Activated CD4-positive, alpha-beta T cell treated with anti-CD3 and anti-CD28 coated beads, Interleukin-2, amount 10 ng/mL, durations not matched to agents 24 days and 14 days (primary cell): ENCODE measurements at regions of chr14 and their contacts with region 1.

Region 1: DNA sequence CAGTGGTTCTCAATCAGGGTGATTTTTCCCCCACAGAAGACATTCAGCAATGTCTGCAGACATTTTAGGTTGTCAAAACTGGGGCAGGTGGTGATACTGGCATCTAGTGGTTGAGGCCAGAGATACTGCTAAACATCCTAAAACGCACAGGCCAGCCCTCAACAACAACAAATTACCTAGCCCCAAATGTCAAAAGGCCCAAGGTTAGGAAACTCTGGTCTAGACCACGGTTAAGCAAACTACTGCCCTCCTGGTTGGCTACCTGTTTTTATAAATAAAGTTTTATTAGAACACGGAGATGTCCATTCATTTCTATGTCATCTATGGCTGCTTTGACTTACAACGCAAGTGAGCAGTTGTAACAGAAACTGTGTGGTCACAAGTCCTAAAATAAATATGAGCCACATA is 186.7 kb downstream of the EFCAB11 start:
- DNase-seq: peak; percentile 89
- H3K4me3 Mint-ChIP-seq: no peak overlapping the region
- H3K27ac Mint-ChIP-seq: peak overlapping the region; percentile 12
- H3K4me1 Mint-ChIP-seq: peaks cover 16% of the 10 kb centered on the region
- H3K27me3 Mint-ChIP-seq: peaks cover 12% of the 10 kb centered on the region

Region 2: GRCh38 chr14:89040460-89041259 is 727.2 kb before region 1 on chr14:
- intact Hi-C with region 1: loop called (anchors 1 kb)
- DNase-seq: peak; percentile 93
- H3K4me3 Mint-ChIP-seq: peak overlapping the region; percentile 70
- H3K27ac Mint-ChIP-seq: no peak overlapping the region
- H3K4me1 Mint-ChIP-seq: peaks cover 7% of the 10 kb centered on the region
- H3K27me3 Mint-ChIP-seq: peaks cover 14% of the 10 kb centered on the region

Region 3: DNA sequence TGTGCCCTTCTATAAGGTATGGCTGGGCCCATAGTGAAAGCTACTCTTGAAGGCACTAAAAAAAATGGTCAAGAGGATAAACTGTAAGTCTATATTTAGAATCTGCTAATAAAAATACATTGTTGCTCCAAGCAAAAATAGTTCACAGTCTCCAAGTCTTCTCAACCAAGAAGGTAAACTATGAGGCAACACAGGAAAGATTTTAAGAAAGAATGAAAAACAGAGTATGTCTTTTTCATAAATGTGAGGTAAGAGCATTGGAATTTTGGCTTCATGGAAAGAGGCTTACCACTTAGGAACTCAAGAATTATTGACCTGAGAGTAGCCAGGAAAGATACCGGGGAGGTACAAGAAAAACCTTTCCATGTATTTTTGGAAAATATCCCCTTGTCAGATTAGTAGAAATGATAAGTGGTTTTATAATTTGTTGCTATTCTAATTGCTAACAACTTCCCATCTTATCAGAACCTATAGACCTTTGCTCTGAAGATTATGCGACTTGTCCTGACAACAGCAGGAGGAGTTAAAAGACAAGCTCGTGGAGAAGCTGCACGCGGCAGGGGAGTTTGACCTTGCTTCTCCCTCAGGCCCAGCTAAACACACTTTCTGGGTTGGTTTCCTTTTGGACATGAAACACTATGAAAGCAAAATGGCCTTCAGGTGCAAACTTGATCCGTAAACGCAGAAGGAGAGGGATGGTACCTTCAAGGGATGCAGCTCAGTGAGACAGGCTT is 588.9 kb before region 1 on chr14:
- intact Hi-C with region 1: loop called (anchors 5 kb)
- DNase-seq: no peak
- H3K4me3 Mint-ChIP-seq: no peak overlapping the region
- H3K27ac Mint-ChIP-seq: no peak overlapping the region
- H3K4me1 Mint-ChIP-seq: peaks cover 5% of the 10 kb centered on the region
- H3K27me3 Mint-ChIP-seq: no peaks in the 10 kb centered on the region

Region 4: GRCh38 chr14:89504602-89505313 is 263.1 kb before region 1 on chr14:
- intact Hi-C with region 1: loop called (anchors 5 kb)
- DNase-seq: peak; percentile 69
- H3K4me3 Mint-ChIP-seq: no peak overlapping the region
- H3K27ac Mint-ChIP-seq: peak overlapping the region; percentile 16
- H3K4me1 Mint-ChIP-seq: peaks cover 42% of the 10 kb centered on the region
- H3K27me3 Mint-ChIP-seq: no peaks in the 10 kb centered on the region

Region 5: DNA sequence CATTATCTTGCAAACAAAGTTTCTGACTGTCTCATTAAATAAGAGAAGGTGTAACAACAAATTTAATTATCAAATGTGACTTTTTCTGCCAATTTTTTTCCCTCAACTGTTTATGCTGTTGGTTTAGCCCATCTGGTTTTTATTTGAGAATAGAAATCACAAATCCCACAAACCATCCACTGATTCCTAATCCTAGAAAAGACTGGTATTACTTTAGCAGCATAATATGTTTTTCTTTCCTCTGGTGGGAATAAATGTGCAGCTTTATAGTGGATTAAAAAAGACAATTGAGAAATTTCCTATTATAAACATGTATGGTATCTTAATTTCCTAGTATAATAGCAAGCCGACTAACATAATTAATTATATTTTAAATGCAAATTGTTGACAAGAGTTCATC is 92.9 kb before region 1 on chr14:
- intact Hi-C with region 1: loop called (anchors 5 kb)
- DNase-seq: no peak
- H3K4me3 Mint-ChIP-seq: no peak overlapping the region
- H3K27ac Mint-ChIP-seq: no peak overlapping the region
- H3K4me1 Mint-ChIP-seq: peaks cover 25% of the 10 kb centered on the region
- H3K27me3 Mint-ChIP-seq: no peaks in the 10 kb centered on the region